ENCODE measurements at regions of chr10 and their contacts with region 1.

Region 1: DNA sequence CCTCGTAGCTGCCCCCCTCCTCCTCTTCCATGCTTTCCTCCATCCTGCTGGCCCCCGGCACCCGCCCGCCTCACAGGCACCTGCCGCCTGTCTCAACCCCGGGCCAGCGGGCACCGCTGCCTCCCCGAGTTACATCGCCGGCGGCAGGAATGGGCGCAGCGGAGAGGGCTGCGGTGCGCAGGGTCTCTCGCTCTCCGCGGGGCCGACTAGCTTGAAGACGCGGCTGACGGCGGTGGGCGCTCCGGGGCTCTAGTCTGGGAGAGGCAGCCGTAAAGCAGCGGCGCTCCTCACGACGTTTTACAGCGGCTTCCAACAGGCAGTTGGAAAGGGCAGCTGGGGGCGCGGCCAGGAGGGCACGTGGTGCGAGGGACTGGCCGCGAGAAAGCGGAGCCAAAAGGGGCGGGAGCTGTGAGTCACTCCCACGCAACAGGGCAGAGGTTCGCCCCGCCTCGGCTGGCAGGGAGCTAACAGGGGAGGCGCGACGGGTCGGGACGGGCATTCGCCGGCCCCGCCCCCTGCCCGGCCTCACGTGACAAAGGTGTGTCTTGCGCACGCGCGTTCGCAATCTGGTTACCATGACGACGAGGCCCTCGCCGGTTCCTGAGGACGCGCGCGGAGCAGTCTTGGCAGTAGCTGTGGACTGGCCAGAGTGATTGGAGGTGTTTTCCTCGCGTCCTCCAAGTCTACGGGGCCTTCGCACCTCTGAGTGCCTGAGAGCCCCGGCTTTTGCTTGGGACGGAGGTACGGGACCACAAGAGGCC is at the start of gene CACUL1:
- DNase-seq: peak; percentile 100
- ATAC-seq: peak; percentile 97
- H3K4me3 ChIP-seq: peak within 1 kb of the TSS; percentile 80 to 98 (median 93)
- H3K4me3 Mint-ChIP-seq: peak within 1 kb of the TSS; percentile 96
- H3K27ac ChIP-seq: peak within 1 kb of the TSS; percentile 84 to 93
- H3K27ac Mint-ChIP-seq: peak within 1 kb of the TSS; percentile 89
- H3K4me1 ChIP-seq: peaks cover 25 to 26% of the 10 kb centered on the region in 2 donors
- H3K4me1 Mint-ChIP-seq: peaks cover 42% of the 10 kb centered on the region
- H3K27me3 ChIP-seq: no peaks in the 10 kb centered on the region
- H3K27me3 Mint-ChIP-seq: no peaks in the 10 kb centered on the region
- CTCF ChIP-seq: no peak
- total RNA-seq, gene CACUL1: 37.4 and 39.5 TPM in 2 replicates

Region 2: DNA sequence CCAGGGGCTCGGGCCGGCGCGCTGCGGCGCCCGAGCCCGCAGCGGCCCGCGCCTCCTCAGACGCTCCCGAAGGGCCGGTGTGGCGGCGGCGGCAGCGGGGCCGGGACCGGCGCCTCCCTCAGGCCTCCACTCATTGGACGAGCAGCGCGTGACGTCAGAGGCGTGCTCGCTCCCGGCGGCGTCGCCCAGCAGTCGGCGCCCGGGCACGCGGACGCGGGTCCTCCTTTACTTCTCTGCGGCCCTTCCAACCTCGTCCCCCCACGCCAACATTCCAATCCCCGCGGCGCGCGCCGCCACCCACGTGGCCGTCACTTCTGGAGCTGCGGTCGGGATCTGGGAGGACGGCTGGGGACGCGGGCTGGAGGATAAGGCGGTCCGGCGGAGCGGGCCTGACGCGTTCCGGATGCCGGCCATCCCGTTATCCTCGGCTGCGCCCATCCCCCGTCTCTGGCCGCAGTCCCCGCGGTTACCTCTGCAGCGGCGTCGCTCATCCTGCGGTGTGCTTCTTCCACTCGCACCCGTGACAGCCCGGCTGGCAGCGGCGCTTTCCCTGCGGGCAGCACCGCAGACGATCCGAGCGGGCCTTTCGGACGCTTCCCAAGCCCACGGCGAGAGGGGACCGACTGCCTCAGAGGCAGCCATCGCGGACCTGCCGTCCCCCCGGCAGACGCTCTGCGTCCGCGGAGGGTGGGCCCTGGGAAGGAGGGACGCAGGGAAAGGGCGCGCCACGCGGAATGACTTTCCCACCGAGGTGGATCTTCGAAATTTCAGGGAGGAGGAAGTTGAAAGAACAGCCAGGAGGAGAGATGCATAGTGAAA is 1379.3 kb before region 1 on chr10 and contains the start of gene PDZD8:
- CTCF ChIA-PET with region 1: no interaction called
- POLR2A ChIA-PET with region 1: no interaction called
- intact Hi-C with region 1: loop called (anchors 10 kb)
- DNase-seq: peak; percentile 93
- ATAC-seq: peak; percentile 89
- H3K4me3 ChIP-seq: peak within 1 kb of the TSS; percentile 76 to 99 (median 90)
- H3K4me3 Mint-ChIP-seq: peak within 1 kb of the TSS; percentile 97
- H3K27ac ChIP-seq: peak within 1 kb of the TSS; percentile 70 to 80
- H3K27ac Mint-ChIP-seq: peak within 1 kb of the TSS; percentile 91
- H3K4me1 ChIP-seq: peaks cover 17 to 24% of the 10 kb centered on the region in 2 donors
- H3K4me1 Mint-ChIP-seq: peaks cover 31% of the 10 kb centered on the region
- H3K27me3 ChIP-seq: peaks cover 0 to 23% (median 4%) of the 10 kb centered on the region in 4 experiments
- H3K27me3 Mint-ChIP-seq: peaks cover 25% of the 10 kb centered on the region
- CTCF ChIP-seq: no peak
- total RNA-seq, gene PDZD8: 11.3 and 13.2 TPM in 2 replicates

Region 3: GRCh38 chr10:118341791-118342637 is 412.9 kb before region 1 on chr10 and contains the start of gene FAM204A:
- CTCF ChIA-PET with region 1: no interaction called
- POLR2A ChIA-PET with region 1: no interaction called
- intact Hi-C with region 1: loop called (anchors 1 kb)
- DNase-seq: peak; percentile 98
- ATAC-seq: peak; percentile 98
- H3K4me3 ChIP-seq: peak within 1 kb of the TSS; percentile 82 to 96 (median 94)
- H3K4me3 Mint-ChIP-seq: peak within 1 kb of the TSS; percentile 95
- H3K27ac ChIP-seq: peak within 1 kb of the TSS; percentile 31 to 90
- H3K27ac Mint-ChIP-seq: peak within 1 kb of the TSS; percentile 96
- H3K4me1 ChIP-seq: peaks cover 20 to 21% of the 10 kb centered on the region in 2 donors
- H3K4me1 Mint-ChIP-seq: peaks cover 51% of the 10 kb centered on the region
- H3K27me3 ChIP-seq: no peaks in the 10 kb centered on the region
- H3K27me3 Mint-ChIP-seq: peaks cover 4% of the 10 kb centered on the region
- CTCF ChIP-seq: no peak
- total RNA-seq, gene FAM204A: 77.8 and 79.8 TPM in 2 replicates

Region 4: DNA sequence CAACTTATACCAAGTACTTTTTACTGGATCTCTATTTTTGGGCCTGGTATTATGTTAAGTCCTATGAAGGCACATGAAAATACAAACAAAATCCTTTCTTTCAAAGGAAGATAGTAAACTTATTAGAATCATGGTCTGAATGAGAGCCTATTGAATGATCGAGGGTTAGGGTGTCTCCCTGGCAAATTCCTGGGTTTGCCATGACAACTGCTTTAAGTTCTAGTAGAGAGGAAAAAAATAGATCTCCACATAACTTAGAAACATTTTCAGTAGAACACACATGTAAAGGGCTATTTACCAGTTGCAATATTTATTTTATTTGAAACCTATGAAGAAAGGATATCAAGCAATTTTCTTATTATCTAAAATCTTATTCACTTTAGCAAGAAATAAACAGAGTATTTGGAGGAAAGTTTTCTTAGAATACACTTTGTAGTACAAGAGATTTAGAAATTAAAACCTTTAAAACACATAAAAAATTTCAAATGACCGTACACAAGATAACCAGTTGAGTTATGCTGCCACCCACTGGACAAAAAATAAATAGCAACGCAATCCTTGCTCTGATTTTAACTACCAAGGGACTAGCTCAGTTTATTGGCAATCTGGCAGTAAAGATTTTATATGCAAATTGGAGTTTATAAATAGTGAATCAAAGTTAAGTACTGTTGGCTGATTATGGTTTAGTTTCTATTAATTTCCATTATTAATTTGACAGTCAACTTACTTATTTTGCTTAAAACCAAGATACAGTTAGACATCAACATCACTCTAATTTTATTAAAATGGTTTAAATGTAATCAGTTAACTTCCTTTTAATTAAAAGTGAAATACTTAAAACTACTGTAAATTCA is 34.0 kb before region 1 on chr10:
- CTCF ChIA-PET with region 1: interaction called, 13 read pairs
- POLR2A ChIA-PET with region 1: no interaction called
- intact Hi-C with region 1: no loop called
- DNase-seq: peak; percentile 71
- ATAC-seq: peak; percentile 39
- H3K4me3 ChIP-seq: no peak overlapping the region
- H3K4me3 Mint-ChIP-seq: no peak overlapping the region
- H3K27ac ChIP-seq: no peak overlapping the region
- H3K27ac Mint-ChIP-seq: no peak overlapping the region
- H3K4me1 ChIP-seq: no peaks in the 10 kb centered on the region
- H3K4me1 Mint-ChIP-seq: peaks cover 13% of the 10 kb centered on the region
- H3K27me3 ChIP-seq: no peaks in the 10 kb centered on the region
- H3K27me3 Mint-ChIP-seq: no peaks in the 10 kb centered on the region
- CTCF ChIP-seq: peak; percentile 97

Region 5: DNA sequence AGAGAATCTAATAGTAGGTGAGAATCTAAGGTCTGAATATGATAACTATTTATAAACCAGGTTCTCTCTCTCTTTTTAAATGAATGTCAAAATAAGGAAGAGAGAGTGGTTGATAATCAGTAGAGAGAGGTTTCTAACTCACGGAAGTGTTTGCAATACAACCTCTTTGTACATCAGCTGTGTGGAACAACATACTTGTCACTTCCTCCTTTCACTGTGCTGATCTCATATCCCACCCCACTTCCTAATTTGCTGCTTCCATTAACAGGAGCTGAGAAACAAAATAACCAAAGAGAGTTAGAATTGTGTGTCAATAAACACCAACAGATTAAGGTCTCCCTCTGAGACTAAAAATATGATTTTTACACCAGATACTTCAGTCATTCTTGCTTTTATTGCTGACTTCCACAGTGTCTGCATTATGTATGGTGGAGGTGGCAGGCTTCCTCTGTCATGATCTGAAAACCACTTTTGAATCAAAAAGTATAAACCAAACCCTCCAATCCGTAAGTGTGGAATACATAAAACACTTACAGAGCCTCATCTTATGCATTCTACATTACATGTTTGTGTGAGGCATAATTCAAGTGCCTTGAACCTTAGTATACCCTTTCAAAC is 25.1 kb before region 1 on chr10:
- CTCF ChIA-PET with region 1: interaction called, 9 read pairs
- POLR2A ChIA-PET with region 1: interaction called, 11 read pairs
- intact Hi-C with region 1: loop called (anchors 1 kb)
- DNase-seq: peak; percentile 84
- ATAC-seq: peak; percentile 97
- H3K4me3 ChIP-seq: peak overlapping the region in 3 of 5 experiments; percentile 16 to 45 (median 16)
- H3K4me3 Mint-ChIP-seq: peak overlapping the region; percentile 72
- H3K27ac ChIP-seq: peak overlapping the region; percentile 84 to 94
- H3K27ac Mint-ChIP-seq: peak overlapping the region; percentile 94
- H3K4me1 ChIP-seq: peaks cover 24 to 34% of the 10 kb centered on the region in 2 donors
- H3K4me1 Mint-ChIP-seq: peaks cover 47% of the 10 kb centered on the region
- H3K27me3 ChIP-seq: no peaks in the 10 kb centered on the region
- H3K27me3 Mint-ChIP-seq: no peaks in the 10 kb centered on the region
- CTCF ChIP-seq: no peak

Region 6: DNA sequence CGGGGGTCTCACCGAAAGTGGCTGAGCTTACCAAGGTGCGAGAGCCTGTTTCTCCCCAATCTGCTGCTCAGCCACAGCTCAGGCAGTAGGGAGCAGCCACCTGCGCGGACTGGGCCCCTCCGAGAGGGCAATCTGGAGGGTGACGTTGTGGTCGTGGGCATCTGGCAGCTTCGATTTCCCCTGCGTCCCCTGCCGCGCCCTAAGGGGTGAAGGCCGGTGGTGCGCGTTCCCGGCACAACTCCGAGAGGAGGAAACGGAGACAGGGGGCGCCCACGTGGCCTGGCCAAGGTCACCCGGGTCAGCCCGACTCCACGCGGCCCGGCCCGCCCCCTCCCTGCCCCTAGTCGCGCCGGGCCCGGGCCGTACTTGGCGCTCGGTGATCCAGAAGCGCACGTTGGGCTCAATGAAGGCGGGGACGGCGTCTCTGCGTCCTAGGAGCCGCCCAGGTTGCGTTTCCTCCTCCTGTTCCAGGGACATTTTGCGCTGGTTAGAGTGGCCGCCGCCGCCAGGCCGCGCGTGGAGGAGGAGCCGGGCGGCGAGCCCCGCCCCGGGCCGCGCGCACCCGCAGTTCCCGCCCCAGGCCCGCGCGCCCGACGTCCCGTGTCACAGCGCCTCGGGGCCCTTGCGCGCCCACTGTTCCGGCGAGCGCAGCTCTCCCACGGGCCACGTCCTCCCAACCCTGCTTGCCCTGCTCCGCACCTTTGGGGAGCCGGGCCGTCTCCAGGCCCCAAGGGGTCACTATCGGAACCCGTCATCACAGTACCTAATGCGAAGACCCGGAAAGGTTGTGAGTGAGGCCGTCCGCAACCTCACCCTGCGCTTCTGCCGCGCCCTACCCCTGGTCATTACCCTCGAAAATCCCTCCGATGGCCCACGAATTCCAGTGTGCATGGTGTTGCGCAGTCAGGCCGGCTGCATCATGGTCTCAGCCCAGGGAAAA is 410.5 kb after region 1 on chr10 and contains the start of gene SFXN4:
- CTCF ChIA-PET with region 1: no interaction called
- POLR2A ChIA-PET with region 1: no interaction called
- intact Hi-C with region 1: loop called (anchors 5 kb)
- DNase-seq: peak; percentile 89
- ATAC-seq: peak; percentile 92
- H3K4me3 ChIP-seq: peak within 1 kb of the TSS; percentile 46 to 86 (median 79)
- H3K4me3 Mint-ChIP-seq: peak within 1 kb of the TSS; percentile 96
- H3K27ac ChIP-seq: peak within 1 kb of the TSS; percentile 72 to 80
- H3K27ac Mint-ChIP-seq: peak within 1 kb of the TSS; percentile 93
- H3K4me1 ChIP-seq: peaks cover 7 to 19% of the 10 kb centered on the region in 2 donors
- H3K4me1 Mint-ChIP-seq: peaks cover 20% of the 10 kb centered on the region
- H3K27me3 ChIP-seq: no peaks in the 10 kb centered on the region
- H3K27me3 Mint-ChIP-seq: no peaks in the 10 kb centered on the region
- CTCF ChIP-seq: no peak
- total RNA-seq, gene SFXN4: 8.4 and 9.8 TPM in 2 replicates

Region 7: DNA sequence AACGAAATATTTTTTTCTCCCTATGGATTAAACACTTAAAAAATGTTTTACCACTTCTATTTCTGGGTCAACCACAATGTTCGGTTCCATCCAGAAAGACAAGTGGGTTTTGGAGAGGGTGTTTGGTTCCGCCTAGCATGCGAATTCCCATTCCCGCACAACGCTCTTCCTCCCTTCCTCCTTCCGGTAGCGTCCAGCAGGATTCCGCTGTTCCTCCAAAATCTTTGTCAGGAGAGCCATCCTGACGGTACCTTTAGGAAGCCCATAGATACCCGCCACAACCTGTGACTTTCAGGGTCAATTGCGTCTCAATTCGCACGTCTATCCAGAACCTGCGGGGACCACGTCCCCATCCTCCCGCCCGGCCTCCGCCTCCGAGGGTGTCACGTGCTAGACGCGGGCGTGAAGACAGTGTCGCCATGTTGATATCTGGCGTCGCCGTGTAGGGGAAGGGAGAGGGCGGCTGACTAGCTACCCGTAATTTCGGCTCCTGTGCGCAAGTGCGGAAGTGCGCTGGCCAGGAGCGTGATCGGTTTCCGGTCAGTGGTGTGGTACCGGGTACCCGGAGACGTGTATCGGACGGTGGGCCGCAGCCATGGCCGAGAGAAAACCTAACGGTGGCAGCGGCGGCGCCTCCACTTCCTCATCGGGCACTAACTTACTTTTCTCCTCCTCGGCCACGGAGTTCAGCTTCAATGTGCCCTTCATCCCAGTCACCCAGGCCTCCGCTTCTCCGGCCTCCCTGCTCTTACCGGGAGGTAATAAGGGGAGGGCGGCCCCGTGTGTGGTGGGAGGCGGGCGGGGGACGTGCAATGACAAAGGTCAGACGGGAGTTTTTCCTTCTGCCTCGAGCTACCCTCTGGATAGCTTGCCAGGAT is 1137.5 kb after region 1 on chr10 and contains the start of gene SEC23IP:
- CTCF ChIA-PET with region 1: no interaction called
- POLR2A ChIA-PET with region 1: no interaction called
- intact Hi-C with region 1: loop called (anchors 2 kb)
- DNase-seq: peak; percentile 92
- ATAC-seq: peak; percentile 98
- H3K4me3 ChIP-seq: peak within 1 kb of the TSS; percentile 76 to 98 (median 95)
- H3K4me3 Mint-ChIP-seq: peak within 1 kb of the TSS; percentile 96
- H3K27ac ChIP-seq: peak within 1 kb of the TSS; percentile 82
- H3K27ac Mint-ChIP-seq: peak within 1 kb of the TSS; percentile 98
- H3K4me1 ChIP-seq: peaks cover 12 to 13% of the 10 kb centered on the region in 2 donors
- H3K4me1 Mint-ChIP-seq: peaks cover 45% of the 10 kb centered on the region
- H3K27me3 ChIP-seq: no peaks in the 10 kb centered on the region
- H3K27me3 Mint-ChIP-seq: no peaks in the 10 kb centered on the region
- CTCF ChIP-seq: no peak
- total RNA-seq, gene SEC23IP: 69.7 and 77.3 TPM in 2 replicates